ENCODE measurements at regions of chr4 and their contacts with region 1.

Region 1: GRCh38 chr4:132383571-132384199 is 765.4 kb upstream of the PCDH10 start:
- DNase-seq: no peak
- H3K4me3 ChIP-seq: no peak overlapping the region
- H3K27ac ChIP-seq: no peak overlapping the region
- H3K4me1 ChIP-seq: no peaks in the 10 kb centered on the region
- H3K27me3 ChIP-seq: no peaks in the 10 kb centered on the region
- CTCF ChIP-seq: no peak

Region 2: GRCh38 chr4:132344924-132345828 is 38.5 kb before region 1 on chr4:
- CTCF ChIA-PET with region 1: no interaction called
- POLR2A ChIA-PET with region 1: interaction called, 15 read pairs
- intact Hi-C with region 1: no loop called
- DNase-seq: peak; percentile 39 to 81
- H3K4me3 ChIP-seq: peak overlapping the region; percentile 80
- H3K27ac ChIP-seq: peak overlapping the region; percentile 86
- H3K4me1 ChIP-seq: peaks cover 5% of the 10 kb centered on the region; the same call in 1 of the 2 replicates
- H3K27me3 ChIP-seq: no peaks in the 10 kb centered on the region
- CTCF ChIP-seq: no peak